HCT116 (cell line): ENCODE measurements at regions of chr7 and their contacts with region 1.

Region 1: GRCh38 chr7:90211391-90212148 is at the start of gene STEAP2:
- DNase-seq: peak; percentile 82
- ATAC-seq: peak; percentile 95
- H3K4me3 ChIP-seq: peak within 1 kb of the TSS; percentile 69 to 85
- H3K27ac ChIP-seq: peak within 1 kb of the TSS; percentile 88
- H3K4me1 ChIP-seq: peaks cover 9 to 22% of the 10 kb centered on the region in 2 experiments
- H3K27me3 ChIP-seq: no peaks in the 10 kb centered on the region
- CTCF ChIP-seq: peak in 2 of 3 experiments; percentile 63 to 69; a peak in 4 of 6 replicates
- POLR2A ChIP-seq: no peak
- RAD21 ChIP-seq: peak; percentile 34; the same call in 1 of the 2 replicates
- total RNA-seq, gene STEAP2: 13.4 TPM

Region 2: GRCh38 chr7:90178679-90179278 is 32.8 kb before region 1 on chr7:
- CTCF ChIA-PET with region 1: interaction called, 5 read pairs
- POLR2A ChIA-PET with region 1: interaction called, 10 read pairs
- RAD21 ChIA-PET with region 1: no interaction called
- intact Hi-C with region 1: loop called (anchors 2 kb)
- DNase-seq: peak; percentile 97
- ATAC-seq: peak; percentile 94
- H3K4me3 ChIP-seq: peak overlapping the region in 1 of 2 experiments; percentile 38; a peak in 3 of 4 replicates
- H3K27ac ChIP-seq: peak overlapping the region; percentile 83
- H3K4me1 ChIP-seq: peaks cover 35 to 45% of the 10 kb centered on the region in 2 experiments
- H3K27me3 ChIP-seq: no peaks in the 10 kb centered on the region
- CTCF ChIP-seq: no peak
- POLR2A ChIP-seq: no peak
- RAD21 ChIP-seq: 0 out of 2 replicates have a peak, but pooled peaks have one; percentile 1

Region 3: GRCh38 chr7:90192872-90193750 is 18.5 kb before region 1 on chr7:
- CTCF ChIA-PET with region 1: interaction called, 11 read pairs
- POLR2A ChIA-PET with region 1: interaction called, 12 read pairs
- RAD21 ChIA-PET with region 1: no interaction called
- intact Hi-C with region 1: no loop called
- DNase-seq: no peak
- ATAC-seq: no peak
- H3K4me3 ChIP-seq: no peak overlapping the region
- H3K27ac ChIP-seq: no peak overlapping the region
- H3K4me1 ChIP-seq: peaks cover 0 to 5% of the 10 kb centered on the region in 2 experiments; a peak in 2 of 4 replicates
- H3K27me3 ChIP-seq: no peaks in the 10 kb centered on the region
- CTCF ChIP-seq: no peak
- POLR2A ChIP-seq: no peak
- RAD21 ChIP-seq: no peak